Transverse colon (tissue), 4 donors: ENCODE measurements at regions of chr18 and their contacts with region 1.

Region 1: GRCh38 chr18:31710826-31711225 is 26.4 kb upstream of the B4GALT6 start:
- DNase-seq: no peak
- H3K4me3 ChIP-seq: no peak overlapping the region
- H3K27ac ChIP-seq: no peak overlapping the region
- H3K4me1 ChIP-seq: no peaks in the 10 kb centered on the region
- H3K27me3 ChIP-seq: no peaks in the 10 kb centered on the region
- CTCF ChIP-seq: no peak
- EP300 ChIP-seq: no peak
- POLR2A ChIP-seq: no peak

Region 2: GRCh38 chr18:30999186-30999585 is 711.6 kb before region 1 on chr18:
- in situ Hi-C with region 1: no loop called
- intact Hi-C with region 1: no loop called
- DNase-seq: no peak
- H3K4me3 ChIP-seq: no peak overlapping the region
- H3K27ac ChIP-seq: no peak overlapping the region
- H3K4me1 ChIP-seq: no peaks in the 10 kb centered on the region
- H3K27me3 ChIP-seq: no peaks in the 10 kb centered on the region
- CTCF ChIP-seq: no peak
- EP300 ChIP-seq: no peak
- POLR2A ChIP-seq: no peak

Region 3: DNA sequence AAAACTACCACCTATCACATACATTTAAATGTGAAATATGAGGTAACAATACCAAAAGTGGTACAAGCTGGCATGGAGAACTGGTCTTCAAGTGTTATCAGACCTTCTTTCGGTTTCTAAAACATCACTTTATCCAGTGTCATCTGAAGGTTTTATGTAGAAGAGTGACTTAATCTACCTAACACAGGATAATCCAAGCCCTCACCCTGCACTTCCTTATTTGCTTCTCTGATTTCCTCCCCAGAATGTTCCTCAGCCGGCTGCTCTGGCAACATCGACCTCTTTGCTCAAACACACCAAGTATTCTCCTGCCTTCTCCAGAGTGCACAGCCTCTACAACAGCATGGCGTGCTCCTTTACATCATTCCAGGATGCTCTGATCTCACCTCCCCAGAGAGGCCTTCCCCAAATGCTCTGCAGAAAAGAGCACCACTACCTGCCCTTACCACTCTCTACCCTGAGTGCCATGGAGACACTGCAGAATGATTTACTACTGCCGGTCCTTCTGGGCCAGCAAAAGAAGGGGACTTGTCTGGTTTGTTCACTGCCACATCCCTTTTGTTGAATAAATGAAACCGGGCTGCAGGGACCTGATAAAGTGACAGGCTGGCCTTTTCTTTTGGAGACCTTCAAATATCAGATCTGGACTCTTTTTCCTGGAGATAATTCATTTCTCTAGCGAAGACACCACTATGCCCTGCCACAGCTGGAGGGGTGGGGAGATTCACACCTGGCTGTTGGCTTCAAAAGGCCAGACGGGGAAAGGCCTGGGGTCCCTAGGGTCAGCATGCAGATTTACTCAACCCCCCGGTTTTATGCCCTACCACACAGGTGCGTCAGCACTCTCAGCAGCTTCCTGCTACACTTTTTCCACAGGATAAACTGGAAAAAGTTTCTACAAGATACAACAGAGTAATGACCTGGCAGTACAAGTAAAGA is 77.2 kb before region 1 on chr18:
- in situ Hi-C with region 1: no loop called
- intact Hi-C with region 1: loop called (anchors 2 kb)
- DNase-seq: no peak
- H3K4me3 ChIP-seq: no peak overlapping the region
- H3K27ac ChIP-seq: no peak overlapping the region
- H3K4me1 ChIP-seq: no peaks in the 10 kb centered on the region
- H3K27me3 ChIP-seq: no peaks in the 10 kb centered on the region
- CTCF ChIP-seq: no peak
- EP300 ChIP-seq: no peak
- POLR2A ChIP-seq: no peak